ENCODE measurements at regions of chr3 and their contacts with region 1.

Region 1: GRCh38 chr3:123723522-123724168 is 138.8 kb upstream of the HACD2 start:
- DNase-seq: peak; percentile 63
- H3K4me3 ChIP-seq: no peak overlapping the region
- H3K27ac ChIP-seq: peak overlapping the region; percentile 39
- H3K27me3 ChIP-seq: no peaks in the 10 kb centered on the region
- CTCF ChIP-seq: peak; percentile 92

Region 2: DNA sequence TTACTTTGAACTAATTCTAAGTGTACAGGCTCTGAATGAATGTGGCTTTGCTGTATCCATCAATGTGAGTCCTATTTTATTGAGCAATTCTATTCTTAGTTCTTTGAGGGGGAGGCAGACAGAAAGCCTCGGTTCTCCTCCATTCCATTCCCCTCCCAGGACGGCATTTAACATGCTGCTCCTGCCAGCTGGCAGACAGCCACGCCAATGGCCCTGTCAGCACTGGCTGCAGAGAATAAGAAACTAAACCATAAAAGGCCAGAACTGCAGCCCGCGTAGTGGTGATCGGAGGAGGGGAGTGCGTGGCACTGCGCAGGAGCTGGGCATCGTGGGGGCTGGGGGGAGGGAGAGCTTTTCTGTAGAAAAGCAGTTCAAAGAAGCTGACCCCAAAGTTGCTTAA is 62.7 kb before region 1 on chr3:
- CTCF ChIA-PET with region 1: interaction called, 11 read pairs
- POLR2A ChIA-PET with region 1: no interaction called
- DNase-seq: peak; percentile 94
- H3K4me3 ChIP-seq: no peak overlapping the region
- H3K27ac ChIP-seq: peak overlapping the region; percentile 83
- H3K27me3 ChIP-seq: no peaks in the 10 kb centered on the region
- CTCF ChIP-seq: no peak

Region 3: GRCh38 chr3:123706871-123707270 is 16.8 kb before region 1 on chr3:
- CTCF ChIA-PET with region 1: interaction called, 19 read pairs
- POLR2A ChIA-PET with region 1: no interaction called
- DNase-seq: no peak
- H3K4me3 ChIP-seq: no peak overlapping the region
- H3K27ac ChIP-seq: no peak overlapping the region
- H3K27me3 ChIP-seq: no peaks in the 10 kb centered on the region
- CTCF ChIP-seq: no peak

Region 4: GRCh38 chr3:123745184-123745855 is 21.7 kb after region 1 on chr3:
- CTCF ChIA-PET with region 1: interaction called, 33 read pairs
- POLR2A ChIA-PET with region 1: interaction called, 6 read pairs
- DNase-seq: no peak
- H3K4me3 ChIP-seq: no peak overlapping the region
- H3K27ac ChIP-seq: no peak overlapping the region
- H3K27me3 ChIP-seq: no peaks in the 10 kb centered on the region
- CTCF ChIP-seq: no peak; the same call in 1 of the 2 replicates

Region 5: DNA sequence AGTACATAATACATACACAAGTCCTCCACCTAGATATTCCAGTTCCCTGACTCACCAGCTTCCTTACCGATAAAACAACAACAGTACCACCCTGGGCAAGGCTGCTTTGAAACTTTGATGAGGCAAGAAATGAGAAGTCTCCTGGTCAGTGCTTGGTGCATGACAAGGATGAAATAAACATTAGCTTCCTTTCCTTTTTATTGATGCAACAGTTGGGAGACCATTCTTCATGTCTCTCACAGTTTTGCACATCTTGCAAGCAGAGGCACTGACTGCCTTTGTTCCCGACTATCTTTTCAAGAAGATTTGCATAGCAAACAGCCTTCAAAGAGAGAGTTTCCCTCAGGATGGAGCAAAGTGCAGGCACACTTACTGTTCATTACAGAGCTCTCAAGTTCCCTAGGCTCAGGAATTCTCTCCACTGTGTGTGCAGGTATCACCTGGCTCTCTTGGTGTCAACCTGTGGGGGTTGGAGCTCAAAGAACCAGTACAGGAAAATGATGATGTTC is 95.3 kb after region 1 on chr3:
- CTCF ChIA-PET with region 1: interaction called, 11 read pairs
- POLR2A ChIA-PET with region 1: no interaction called
- DNase-seq: peak; percentile 45
- H3K4me3 ChIP-seq: no peak overlapping the region
- H3K27ac ChIP-seq: peak overlapping the region; percentile 85
- H3K27me3 ChIP-seq: no peaks in the 10 kb centered on the region
- CTCF ChIP-seq: no peak

Region 6: GRCh38 chr3:124007186-124007585 is 283.5 kb after region 1 on chr3:
- CTCF ChIA-PET with region 1: no interaction called
- POLR2A ChIA-PET with region 1: no interaction called
- DNase-seq: no peak
- H3K4me3 ChIP-seq: no peak overlapping the region
- H3K27ac ChIP-seq: no peak overlapping the region
- H3K27me3 ChIP-seq: peaks cover 23% of the 10 kb centered on the region
- CTCF ChIP-seq: no peak

Measured in AG04450 (cell line).